WTC11 (cell line): ENCODE measurements at regions of chr9 and their contacts with region 1.

Region 1: GRCh38 chr9:13088720-13089427 is 190.6 kb downstream of the MPDZ start:
- DNase-seq: peak; percentile 51
- ATAC-seq: peak; percentile 93
- H3K4me3 Mint-ChIP-seq: no peak overlapping the region
- H3K27ac Mint-ChIP-seq: no peak overlapping the region
- H3K4me1 Mint-ChIP-seq: peaks cover 8% of the 10 kb centered on the region
- H3K27me3 Mint-ChIP-seq: no peaks in the 10 kb centered on the region
- CTCF ChIP-seq: peak; percentile 65

Region 2: DNA sequence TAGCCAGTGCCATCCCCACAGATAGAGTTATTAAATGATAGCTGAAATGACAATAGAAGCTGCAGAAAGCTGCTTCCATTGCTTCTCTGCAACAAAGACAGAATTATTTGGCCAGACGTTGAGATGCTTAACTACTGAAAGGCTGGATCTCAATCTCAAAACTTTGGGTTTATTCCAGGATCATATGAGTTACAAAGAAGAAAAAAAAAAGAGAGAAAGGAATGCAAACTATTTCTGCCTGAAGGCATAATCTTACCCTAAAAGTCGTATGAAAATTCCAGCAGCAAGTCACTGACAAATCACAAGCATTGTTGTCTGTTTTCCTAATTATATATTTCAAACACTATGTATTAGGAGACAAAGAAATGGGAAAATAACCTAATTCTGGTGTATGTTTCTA is 408.5 kb before region 1 on chr9:
- CTCF ChIA-PET with region 1: no interaction called
- POLR2A ChIA-PET with region 1: no interaction called
- DNase-seq: no peak
- ATAC-seq: peak; percentile 41
- H3K4me3 Mint-ChIP-seq: no peak overlapping the region
- H3K27ac Mint-ChIP-seq: no peak overlapping the region
- H3K4me1 Mint-ChIP-seq: peaks cover 14% of the 10 kb centered on the region
- H3K27me3 Mint-ChIP-seq: no peaks in the 10 kb centered on the region
- CTCF ChIP-seq: no peak

Region 3: GRCh38 chr9:13033959-13034693 is 54.7 kb before region 1 on chr9:
- CTCF ChIA-PET with region 1: interaction called, 13 read pairs
- POLR2A ChIA-PET with region 1: interaction called, 3 read pairs
- DNase-seq: peak; percentile 74
- ATAC-seq: peak; percentile 100
- H3K4me3 Mint-ChIP-seq: no peak overlapping the region
- H3K27ac Mint-ChIP-seq: no peak overlapping the region
- H3K4me1 Mint-ChIP-seq: peaks cover 22% of the 10 kb centered on the region
- H3K27me3 Mint-ChIP-seq: no peaks in the 10 kb centered on the region; the same call in 1 of the 2 replicates
- CTCF ChIP-seq: peak; percentile 65